Mammary epithelial cell (primary cell): ENCODE measurements at regions of chr4 and their contacts with region 1.

Region 1: GRCh38 chr4:54384563-54384962 is 155.5 kb downstream of the PDGFRA start:
- DNase-seq: peak; percentile 14
- H3K4me3 ChIP-seq: no peak overlapping the region
- H3K27ac ChIP-seq: no peak overlapping the region
- H3K4me1 ChIP-seq: no peaks in the 10 kb centered on the region
- H3K27me3 ChIP-seq: peaks cover 2% of the 10 kb centered on the region
- CTCF ChIP-seq: peak; percentile 35 to 63

Region 2: GRCh38 chr4:53346920-53347852 is 1037.4 kb before region 1 on chr4:
- CTCF ChIA-PET with region 1: no interaction called
- dilution Hi-C with region 1: no loop called
- in situ Hi-C with region 1: no loop called
- intact Hi-C with region 1: no loop called
- DNase-seq: peak; percentile 66
- H3K4me3 ChIP-seq: no peak overlapping the region
- H3K27ac ChIP-seq: no peak overlapping the region
- H3K4me1 ChIP-seq: peaks cover 14% of the 10 kb centered on the region
- H3K27me3 ChIP-seq: no peaks in the 10 kb centered on the region
- CTCF ChIP-seq: no peak

Region 3: GRCh38 chr4:54433686-54434085 is 49.1 kb after region 1 on chr4:
- CTCF ChIA-PET with region 1: no interaction called
- dilution Hi-C with region 1: no loop called
- in situ Hi-C with region 1: no loop called
- intact Hi-C with region 1: loop called (anchors 1 kb)
- DNase-seq: peak; percentile 1
- H3K4me3 ChIP-seq: no peak overlapping the region
- H3K27ac ChIP-seq: no peak overlapping the region
- H3K4me1 ChIP-seq: no peaks in the 10 kb centered on the region
- H3K27me3 ChIP-seq: peaks cover 4% of the 10 kb centered on the region
- CTCF ChIP-seq: peak; percentile 55 to 60

Region 4: GRCh38 chr4:54440394-54441136 is 56.0 kb after region 1 on chr4:
- CTCF ChIA-PET with region 1: interaction called, 6 read pairs
- dilution Hi-C with region 1: no loop called
- in situ Hi-C with region 1: no loop called
- intact Hi-C with region 1: loop called (anchors 1 kb)
- DNase-seq: peak; percentile 18
- H3K4me3 ChIP-seq: no peak overlapping the region
- H3K27ac ChIP-seq: no peak overlapping the region
- H3K4me1 ChIP-seq: no peaks in the 10 kb centered on the region
- H3K27me3 ChIP-seq: no peaks in the 10 kb centered on the region
- CTCF ChIP-seq: peak; percentile 66 to 67

Region 5: DNA sequence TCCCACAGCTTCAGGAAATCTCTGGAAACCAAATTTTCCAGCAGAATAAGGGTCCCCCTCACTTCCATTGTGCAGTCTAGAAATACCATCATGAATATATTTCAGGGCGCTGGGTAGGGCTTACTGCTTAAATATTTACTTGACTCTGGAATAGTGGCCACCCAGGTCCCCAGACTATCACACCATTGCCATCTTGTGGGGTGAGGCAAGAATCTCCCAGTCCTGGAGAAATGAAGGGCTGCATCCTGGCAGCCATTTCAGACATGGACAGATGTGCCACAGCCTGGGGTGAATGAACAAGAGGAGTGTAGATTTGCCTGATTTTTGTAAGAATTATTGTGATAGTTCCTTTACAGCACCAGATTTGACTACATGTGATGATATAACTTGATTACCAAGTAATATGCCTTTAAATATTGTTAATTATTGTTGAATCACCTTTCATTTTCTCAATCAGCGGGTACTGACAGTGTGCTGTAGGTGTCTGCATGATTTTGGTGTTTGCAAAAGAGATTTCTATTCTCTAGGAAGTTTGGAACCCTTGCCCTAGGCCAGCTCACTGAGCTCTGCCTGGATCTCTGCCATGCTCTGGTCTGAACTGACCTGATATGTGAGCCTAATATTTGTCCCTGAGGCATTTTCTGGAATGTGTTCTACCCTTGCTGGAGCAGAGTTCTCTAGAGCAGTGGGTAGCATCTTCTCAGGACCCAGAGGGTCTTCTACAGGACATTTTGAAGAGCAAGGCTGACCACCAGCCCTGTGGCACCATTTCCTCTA is 456.6 kb after region 1 on chr4:
- CTCF ChIA-PET with region 1: no interaction called
- dilution Hi-C with region 1: no loop called
- in situ Hi-C with region 1: no loop called
- intact Hi-C with region 1: loop called (anchors 5 kb)
- DNase-seq: no peak
- H3K4me3 ChIP-seq: no peak overlapping the region
- H3K27ac ChIP-seq: no peak overlapping the region
- H3K4me1 ChIP-seq: no peaks in the 10 kb centered on the region
- H3K27me3 ChIP-seq: peaks cover 9% of the 10 kb centered on the region
- CTCF ChIP-seq: peak in 1 of 2 donors; percentile 55

Region 6: DNA sequence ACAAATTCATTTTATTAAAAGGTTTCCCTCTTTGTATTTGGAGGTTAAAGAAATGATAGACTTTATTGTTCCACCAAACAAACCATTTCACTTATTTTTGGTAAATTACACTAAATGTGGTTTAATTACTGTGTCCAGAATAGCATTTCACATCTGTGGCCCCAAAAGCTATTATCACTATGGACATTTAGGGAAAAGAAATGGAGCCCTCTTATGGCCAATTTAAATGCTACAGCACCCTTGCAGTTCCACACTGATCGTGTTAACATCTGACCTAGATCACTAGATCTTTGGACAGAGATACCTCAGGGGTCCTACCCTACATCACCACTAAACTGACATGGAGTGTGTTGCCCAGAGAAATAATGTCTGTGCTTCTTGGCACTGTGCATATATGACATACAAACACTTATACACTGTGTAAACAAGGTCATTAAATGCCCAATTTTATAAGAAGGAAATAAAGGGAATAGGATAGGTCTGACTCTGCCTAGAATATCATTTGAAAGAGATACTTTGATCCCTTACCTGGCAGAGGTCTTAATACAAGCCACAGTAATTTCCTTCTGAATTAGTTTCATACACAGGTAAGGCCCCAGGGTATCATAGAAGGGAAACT is 576.9 kb after region 1 on chr4:
- CTCF ChIA-PET with region 1: no interaction called
- dilution Hi-C with region 1: no loop called
- in situ Hi-C with region 1: no loop called
- intact Hi-C with region 1: loop called (anchors 1 kb)
- DNase-seq: peak; percentile 14
- H3K4me3 ChIP-seq: no peak overlapping the region
- H3K27ac ChIP-seq: no peak overlapping the region
- H3K4me1 ChIP-seq: no peaks in the 10 kb centered on the region
- H3K27me3 ChIP-seq: peaks cover 2% of the 10 kb centered on the region
- CTCF ChIP-seq: peak; percentile 68 to 74